GM10248 (cell line): ENCODE measurements at regions of chr15 and their contacts with region 1.

Region 1: GRCh38 chr15:60362321-60363086 is 35.3 kb downstream of the ANXA2 start:
- DNase-seq: no peak
- CTCF ChIP-seq: no peak

Region 2: DNA sequence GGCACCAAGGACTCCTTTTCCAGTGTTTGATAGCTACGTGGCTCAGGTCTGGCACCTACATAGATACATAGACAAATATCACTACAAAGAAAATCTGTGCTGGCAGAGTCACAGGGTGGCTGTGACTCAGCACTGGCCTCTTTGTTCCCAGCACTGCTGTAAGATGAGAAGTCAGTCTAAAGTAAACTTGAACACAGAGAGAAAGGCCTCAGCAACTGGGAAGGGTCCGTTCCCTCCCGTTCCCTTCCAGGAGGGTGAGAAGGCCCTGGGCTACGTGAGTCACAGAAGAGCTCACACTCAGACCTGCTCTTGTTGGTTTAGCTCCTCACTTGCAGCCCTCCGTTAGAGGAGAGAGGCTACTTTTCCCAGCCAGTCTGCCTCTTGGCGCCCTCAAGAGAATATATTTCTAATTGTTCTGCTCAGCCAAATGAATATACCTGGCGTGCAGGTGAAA is 12.2 kb after region 1 on chr15:
- CTCF ChIA-PET with region 1: interaction called, 43 read pairs
- POLR2A ChIA-PET with region 1: no interaction called
- DNase-seq: no peak
- CTCF ChIP-seq: no peak

Region 3: DNA sequence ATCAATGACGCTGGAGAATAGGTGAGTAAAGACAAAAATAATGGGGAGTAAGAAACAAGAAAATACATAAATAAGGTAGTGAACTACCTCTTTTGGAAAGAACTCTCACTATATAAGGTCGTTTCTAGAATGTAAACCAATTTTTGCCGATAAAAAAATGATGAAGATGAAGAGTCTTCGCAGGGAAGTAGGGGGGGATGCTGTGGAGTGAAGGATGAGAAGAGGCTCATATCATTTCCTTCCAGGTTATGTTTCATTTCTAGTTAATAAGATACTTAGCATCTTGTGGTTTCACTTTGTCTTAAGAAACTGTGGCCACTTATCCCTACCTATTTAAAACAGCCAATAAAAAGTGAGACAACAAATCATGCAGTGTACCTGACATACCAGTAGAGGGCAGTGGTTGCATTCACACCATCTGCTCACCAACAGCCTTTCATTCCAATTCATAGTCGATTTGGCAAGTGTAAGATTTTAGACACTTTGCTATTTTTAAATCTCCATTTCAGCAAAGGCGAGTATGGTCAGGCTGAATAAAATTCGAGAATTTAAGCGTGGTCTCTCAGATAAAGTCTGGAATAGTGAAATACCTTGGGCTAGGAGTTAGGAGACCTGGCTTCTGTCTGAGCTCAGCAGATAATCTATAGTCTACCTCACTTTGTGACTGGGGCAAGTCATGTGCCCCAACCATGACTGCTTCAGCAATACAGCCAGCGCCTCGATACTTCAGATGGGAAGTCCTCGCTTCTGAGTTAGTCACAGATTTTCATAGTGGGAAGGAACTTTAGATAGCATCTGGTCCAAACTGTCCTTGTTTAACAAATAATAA is 145.3 kb after region 1 on chr15:
- CTCF ChIA-PET with region 1: interaction called, 12 read pairs
- POLR2A ChIA-PET with region 1: no interaction called
- DNase-seq: peak; percentile 72
- CTCF ChIP-seq: peak; percentile 83